Activated CD4-positive, alpha-beta memory T cell treated with anti-CD3 and anti-CD28 coated beads for 36 hours (primary cell): ENCODE measurements at regions of chr7 and their contacts with region 1.

Region 1: GRCh38 chr7:139340037-139340807 is 915 bp upstream of the FMC1 start:
- DNase-seq: peak; percentile 99
- H3K4me3 Mint-ChIP-seq: peak overlapping the region; percentile 86
- H3K27ac Mint-ChIP-seq: peak overlapping the region; percentile 99
- H3K4me1 Mint-ChIP-seq: peaks cover 27% of the 10 kb centered on the region
- H3K27me3 Mint-ChIP-seq: peaks cover 4% of the 10 kb centered on the region

Region 2: GRCh38 chr7:139095194-139095659 is 245.0 kb before region 1 on chr7:
- CTCF ChIA-PET with region 1: interaction called, 3 read pairs
- POLR2A ChIA-PET with region 1: interaction called, 3 read pairs
- intact Hi-C with region 1: loop called (anchors 2 kb)
- DNase-seq: peak; percentile 85
- H3K4me3 Mint-ChIP-seq: peak overlapping the region; percentile 71
- H3K27ac Mint-ChIP-seq: peak overlapping the region; percentile 87
- H3K4me1 Mint-ChIP-seq: peaks cover 86% of the 10 kb centered on the region
- H3K27me3 Mint-ChIP-seq: no peaks in the 10 kb centered on the region

Region 3: GRCh38 chr7:139133335-139134139 is 206.7 kb before region 1 on chr7:
- CTCF ChIA-PET with region 1: interaction called, 7 read pairs
- POLR2A ChIA-PET with region 1: interaction called, 3 read pairs
- intact Hi-C with region 1: loop called (anchors 1 kb)
- DNase-seq: peak; percentile 93
- H3K4me3 Mint-ChIP-seq: peak overlapping the region; percentile 76
- H3K27ac Mint-ChIP-seq: peak overlapping the region; percentile 59
- H3K4me1 Mint-ChIP-seq: peaks cover 18% of the 10 kb centered on the region
- H3K27me3 Mint-ChIP-seq: no peaks in the 10 kb centered on the region

Region 4: DNA sequence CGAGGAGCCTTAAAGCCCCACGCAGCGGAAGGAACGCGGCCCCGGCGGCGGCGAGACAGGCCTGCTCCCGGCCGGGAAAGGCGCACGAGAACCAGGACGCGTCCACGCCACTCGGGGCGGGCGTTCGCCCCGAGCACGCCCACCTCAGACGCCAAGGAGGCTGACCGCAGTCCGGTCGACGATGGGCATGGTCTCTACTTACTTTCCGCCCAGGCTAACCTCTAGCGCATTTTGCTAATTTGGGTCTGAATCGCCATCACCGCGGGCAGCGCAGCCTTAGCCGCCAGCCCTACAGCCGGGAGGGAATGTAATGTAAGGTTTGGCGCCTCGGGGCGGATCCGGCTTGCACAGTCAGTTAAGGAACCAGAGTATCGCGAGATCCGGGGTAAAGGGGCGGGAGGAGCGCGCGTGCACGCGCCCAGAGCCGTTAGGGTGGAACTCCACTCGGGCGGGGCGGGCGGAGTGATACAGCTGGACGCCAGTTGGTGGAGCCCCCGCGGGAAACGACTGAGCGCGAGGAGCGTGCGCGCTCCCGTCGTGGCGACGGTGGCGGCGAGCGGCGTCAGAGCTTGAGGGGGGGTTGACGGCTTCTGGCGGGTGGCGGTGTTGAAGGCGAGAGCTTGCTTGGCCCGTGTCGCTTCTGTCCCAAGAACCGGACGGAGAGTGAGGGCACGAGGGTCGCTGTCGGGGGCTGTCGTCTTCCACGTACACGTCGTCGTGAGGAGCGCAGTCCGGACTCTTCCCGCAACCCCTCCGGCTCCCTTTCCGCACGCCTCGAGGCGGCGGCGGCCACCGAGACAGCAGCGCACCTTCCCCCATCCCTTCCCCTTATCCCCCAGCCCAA is 19.4 kb after region 1 on chr7 and contains the start of gene LUC7L2:
- CTCF ChIA-PET with region 1: interaction called, 11 read pairs
- POLR2A ChIA-PET with region 1: interaction called, 29 read pairs
- intact Hi-C with region 1: loop called (anchors 1 kb)
- DNase-seq: peak; percentile 100
- H3K4me3 Mint-ChIP-seq: peak within 1 kb of the TSS; percentile 97
- H3K27ac Mint-ChIP-seq: peak within 1 kb of the TSS; percentile 99
- H3K4me1 Mint-ChIP-seq: peaks cover 40% of the 10 kb centered on the region
- H3K27me3 Mint-ChIP-seq: no peaks in the 10 kb centered on the region
- total RNA-seq, gene LUC7L2: 105 to 114 TPM

Region 5: GRCh38 chr7:139798221-139798620 is 458.0 kb after region 1 on chr7:
- CTCF ChIA-PET with region 1: no interaction called
- POLR2A ChIA-PET with region 1: no interaction called
- intact Hi-C with region 1: no loop called
- DNase-seq: peak; percentile 35
- H3K4me3 Mint-ChIP-seq: no peak overlapping the region
- H3K27ac Mint-ChIP-seq: no peak overlapping the region
- H3K4me1 Mint-ChIP-seq: peaks cover 13% of the 10 kb centered on the region
- H3K27me3 Mint-ChIP-seq: no peaks in the 10 kb centered on the region